Activated CD4-positive, alpha-beta T cell treated with anti-CD3 and anti-CD28 coated beads, Interleukin-2, amount 10 ng/mL, durations not matched to agents 24 days and 14 days (primary cell): ENCODE measurements at regions of chr22 and their contacts with region 1.

Region 1: GRCh38 chr22:38981992-38982927 is at the start of gene APOBEC3B:
- DNase-seq: peak; percentile 94
- H3K4me3 Mint-ChIP-seq: peak within 1 kb of the TSS; percentile 77
- H3K27ac Mint-ChIP-seq: peak within 1 kb of the TSS; percentile 90
- H3K4me1 Mint-ChIP-seq: peaks cover 50% of the 10 kb centered on the region
- H3K27me3 Mint-ChIP-seq: peaks cover 2% of the 10 kb centered on the region
- total RNA-seq, gene APOBEC3B: 25.4 and 26.1 TPM in 2 replicates

Region 2: GRCh38 chr22:38953577-38954413 is 28.5 kb before region 1 on chr22:
- intact Hi-C with region 1: loop called (anchors 1 kb)
- DNase-seq: peak; percentile 94
- H3K4me3 Mint-ChIP-seq: peak overlapping the region; percentile 73
- H3K27ac Mint-ChIP-seq: peak overlapping the region; percentile 98
- H3K4me1 Mint-ChIP-seq: peaks cover 49% of the 10 kb centered on the region
- H3K27me3 Mint-ChIP-seq: no peaks in the 10 kb centered on the region

Region 3: GRCh38 chr22:39021552-39022250 is 39.4 kb after region 1 on chr22:
- intact Hi-C with region 1: loop called (anchors 2 kb)
- DNase-seq: no peak
- H3K4me3 Mint-ChIP-seq: peak overlapping the region; percentile 97
- H3K27ac Mint-ChIP-seq: peak overlapping the region; percentile 97
- H3K4me1 Mint-ChIP-seq: peaks cover 45% of the 10 kb centered on the region
- H3K27me3 Mint-ChIP-seq: no peaks in the 10 kb centered on the region

Region 4: DNA sequence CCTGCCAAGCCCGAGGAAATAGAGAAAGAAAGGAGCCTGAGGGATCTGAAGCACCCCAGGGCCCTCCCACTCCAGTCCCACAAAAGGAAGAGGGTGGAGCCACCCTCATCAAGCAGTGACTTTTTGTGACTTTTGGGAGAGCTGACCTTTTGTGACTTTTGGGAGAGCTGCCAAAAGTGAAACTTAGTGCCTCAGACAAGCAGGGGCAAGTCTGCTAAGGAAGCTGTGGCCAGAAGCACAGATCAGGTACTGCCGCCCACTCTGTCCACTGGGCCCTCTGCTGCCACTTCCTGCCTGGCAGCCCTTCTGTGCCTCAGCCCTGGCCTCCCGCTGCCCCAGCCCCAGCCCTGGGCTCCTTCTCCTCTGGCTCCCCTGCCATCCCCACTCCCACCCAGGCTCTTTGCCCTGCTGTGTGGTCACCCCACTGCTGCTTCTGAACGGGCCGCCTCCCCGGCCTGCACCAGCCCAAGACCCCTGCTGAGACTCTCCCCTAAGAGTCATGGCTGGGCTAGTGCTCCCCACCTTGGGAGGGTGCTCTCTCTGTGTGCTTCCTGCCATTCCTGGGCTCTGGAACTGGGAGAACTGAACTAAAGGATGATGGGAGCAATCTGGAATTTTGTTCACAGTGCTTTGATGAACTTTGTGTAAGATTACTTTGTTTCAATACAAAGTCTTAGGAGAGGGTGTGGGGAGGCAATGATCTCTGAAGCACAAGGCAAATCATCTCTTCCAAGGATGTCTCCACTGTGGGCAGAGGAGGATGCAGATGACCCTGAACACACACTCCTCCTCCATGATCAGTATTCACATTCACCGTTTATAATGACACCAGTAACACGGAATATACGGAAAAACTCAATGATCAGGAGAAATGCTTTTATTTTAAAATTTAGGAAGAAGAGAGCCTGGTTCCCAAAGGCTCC is 115.1 kb after region 1 on chr22 and contains the start of gene APOBEC3H:
- intact Hi-C with region 1: loop called (anchors 5 kb)
- DNase-seq: peak; percentile 84
- H3K4me3 Mint-ChIP-seq: peak within 1 kb of the TSS; percentile 83
- H3K27ac Mint-ChIP-seq: peak within 1 kb of the TSS; percentile 91
- H3K4me1 Mint-ChIP-seq: peaks cover 71% of the 10 kb centered on the region
- H3K27me3 Mint-ChIP-seq: no peaks in the 10 kb centered on the region
- total RNA-seq, gene APOBEC3H: 5.8 and 7.6 TPM in 2 replicates